Ovary (tissue), 10 donors: ENCODE measurements at regions of chr12 and their contacts with region 1.

Region 1: GRCh38 chr12:27733052-27733656 is 22.5 kb downstream of the MRPS35 start:
- DNase-seq: peak in 1 of 5 donors; percentile 28
- H3K4me3 ChIP-seq: no peak overlapping the region
- H3K27ac ChIP-seq: no peak overlapping the region
- H3K4me1 ChIP-seq: no peaks in the 10 kb centered on the region
- H3K27me3 ChIP-seq: no peaks in the 10 kb centered on the region
- CTCF ChIP-seq: peak; percentile 37 to 77 (median 69)
- EP300 ChIP-seq: no peak
- POLR2A ChIP-seq: no peak

Region 2: DNA sequence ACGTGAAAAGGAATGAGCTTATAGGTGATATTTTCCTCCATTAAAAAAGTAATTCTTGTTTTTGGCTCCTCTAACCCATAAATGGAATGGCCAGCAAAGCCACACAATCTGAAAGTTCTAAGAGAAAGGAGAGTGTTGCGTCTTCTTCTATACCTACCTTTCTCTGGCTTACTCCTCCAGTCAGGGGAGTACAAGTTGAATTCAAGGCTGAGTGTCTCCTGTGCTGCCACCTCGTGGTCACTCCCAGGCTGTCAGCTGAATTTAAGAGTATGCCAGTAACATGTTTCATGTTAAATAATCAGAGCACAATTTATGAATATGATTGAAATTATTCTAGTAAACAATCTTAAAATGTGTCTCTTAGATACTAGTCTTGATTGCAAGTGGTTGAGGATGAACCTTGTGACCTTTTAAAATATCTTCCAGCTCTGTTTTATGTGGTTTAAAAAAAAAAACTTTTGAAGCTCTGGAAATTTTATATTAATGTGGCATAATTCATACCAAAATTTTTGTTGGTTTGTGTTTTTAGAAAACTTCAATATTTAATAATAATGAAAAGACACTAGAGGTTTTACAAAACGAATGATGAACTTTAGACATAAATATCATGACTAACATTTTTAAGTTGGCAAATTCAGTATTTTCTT is 207.7 kb after region 1 on chr12:
- intact Hi-C with region 1: loop called in 1 of 4 experiments (anchors 5 kb)
- DNase-seq: peak; percentile 20 to 77 (median 66)
- H3K4me3 ChIP-seq: no peak overlapping the region
- H3K27ac ChIP-seq: no peak overlapping the region
- H3K4me1 ChIP-seq: no peaks in the 10 kb centered on the region
- H3K27me3 ChIP-seq: no peaks in the 10 kb centered on the region
- CTCF ChIP-seq: peak in 2 of 3 donors; percentile 30 to 64
- EP300 ChIP-seq: no peak
- POLR2A ChIP-seq: no peak